GM10248 (cell line): ENCODE measurements at regions of chr12 and their contacts with region 1.

Region 1: DNA sequence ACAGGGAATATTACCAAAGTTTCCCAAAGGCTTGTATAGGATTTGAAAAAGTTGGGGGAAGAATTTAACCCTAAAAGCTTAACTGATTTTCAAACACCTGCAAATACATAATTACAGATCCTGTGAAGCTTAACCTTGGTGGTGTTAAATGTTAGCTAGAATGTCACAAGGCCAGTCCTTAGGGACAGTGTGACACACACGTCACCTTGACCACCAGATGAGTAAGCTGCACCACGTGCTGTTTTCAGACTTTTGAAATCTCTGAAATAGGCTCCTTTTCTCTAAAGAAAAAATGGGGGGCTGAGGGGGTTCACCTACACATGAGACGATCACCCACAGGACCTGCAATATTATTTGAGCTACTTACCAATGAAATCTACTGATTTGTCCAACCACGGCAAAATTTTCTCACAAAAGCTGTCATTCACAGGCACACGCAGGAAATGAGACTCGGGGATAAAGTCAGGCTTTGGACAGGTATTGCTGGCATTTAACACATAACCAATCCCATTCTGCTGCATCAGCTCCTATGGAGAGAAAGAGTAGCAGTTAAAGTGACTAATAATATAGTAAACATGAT is 75.9 kb downstream of the DUSP16 start:
- DNase-seq: peak; percentile 62
- CTCF ChIP-seq: no peak

Region 2: DNA sequence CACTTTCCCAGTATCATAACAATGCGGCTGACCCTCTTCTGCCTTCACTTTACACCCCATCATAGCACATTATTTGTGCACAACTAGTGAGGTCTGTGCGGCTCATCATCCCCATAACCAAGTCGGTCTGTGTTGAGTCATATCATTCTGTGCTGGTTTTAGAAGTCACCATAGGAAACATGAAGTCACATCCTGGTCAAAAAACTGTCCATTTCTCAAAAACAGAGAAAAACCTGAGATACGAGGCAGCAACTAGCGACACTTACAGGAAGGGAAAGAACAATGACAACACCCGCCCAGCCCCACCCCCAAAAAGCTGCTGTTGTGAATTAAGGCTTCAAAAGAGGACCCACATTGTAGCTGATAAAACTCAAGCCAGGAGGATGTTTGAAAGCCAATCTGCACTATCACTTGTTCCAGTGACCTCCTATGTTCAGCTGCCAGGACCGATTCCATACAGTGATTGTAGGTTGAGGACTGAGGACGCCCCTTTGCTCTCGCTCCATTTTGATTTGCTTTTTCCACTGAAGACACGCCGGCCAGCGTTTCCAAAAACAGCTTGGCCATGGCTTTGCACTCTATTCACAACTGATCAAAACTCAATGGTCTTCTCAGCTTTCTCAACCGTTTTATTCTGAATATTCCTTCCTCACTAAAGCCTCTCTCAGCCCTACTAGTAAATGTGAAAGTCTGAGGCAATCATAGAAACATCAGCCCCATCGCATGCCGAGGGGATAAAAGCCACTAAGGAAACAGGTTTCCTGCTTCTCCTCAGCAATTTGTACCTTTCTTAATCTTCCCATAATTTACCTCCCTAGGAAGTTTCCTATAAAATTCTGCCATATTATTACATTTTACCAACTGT is 11.6 kb before region 1 on chr12:
- CTCF ChIA-PET with region 1: interaction called, 34 read pairs
- POLR2A ChIA-PET with region 1: interaction called, 10 read pairs
- DNase-seq: peak; percentile 83
- CTCF ChIP-seq: peak; percentile 22

Region 3: GRCh38 chr12:12503384-12504078 is 16.8 kb after region 1 on chr12:
- CTCF ChIA-PET with region 1: interaction called, 13 read pairs
- POLR2A ChIA-PET with region 1: no interaction called
- DNase-seq: peak; percentile 24
- CTCF ChIP-seq: peak; percentile 12

Region 4: DNA sequence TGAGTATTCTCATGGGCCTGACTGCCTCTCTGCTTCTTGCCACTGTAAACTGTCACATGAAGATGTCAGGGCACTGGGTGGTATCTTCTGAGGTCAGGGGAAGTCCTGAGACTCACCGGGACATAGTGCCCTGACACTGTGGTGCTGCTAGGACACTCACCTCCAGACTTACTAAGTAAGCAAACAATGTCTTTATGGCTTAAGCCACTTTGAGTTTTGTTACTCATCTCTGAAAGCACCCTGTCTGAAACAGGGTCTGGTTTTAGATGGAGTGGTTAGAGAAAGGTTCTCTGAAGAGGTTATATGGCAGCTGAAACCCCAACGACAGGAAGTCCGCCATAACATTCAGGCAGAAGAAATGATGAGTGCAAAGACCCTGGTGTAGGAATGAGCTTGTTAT is 186.5 kb after region 1 on chr12:
- CTCF ChIA-PET with region 1: no interaction called
- POLR2A ChIA-PET with region 1: no interaction called
- DNase-seq: no peak
- CTCF ChIP-seq: no peak